Adrenal gland (tissue), 19 donors: ENCODE measurements at regions of chr6 and their contacts with region 1.

Region 1: GRCh38 chr6:156933201-156934068 is 156.3 kb downstream of the ARID1B start:
- DNase-seq: peak in 3 of 7 donors; percentile 40 to 60 (median 48)
- H3K4me3 ChIP-seq: no peak overlapping the region
- H3K27ac ChIP-seq: peak overlapping the region in 2 of 5 donors; percentile 31 to 39
- H3K4me1 ChIP-seq: peaks cover 17 to 33% of the 10 kb centered on the region in 2 donors
- H3K27me3 ChIP-seq: no peaks in the 10 kb centered on the region
- CTCF ChIP-seq: no peak
- POLR2A ChIP-seq: no peak

Region 2: GRCh38 chr6:156816505-156816904 is 116.9 kb before region 1 on chr6:
- intact Hi-C with region 1: loop called in 1 of 2 experiments (anchors 10 kb)
- DNase-seq: peak in 5 of 7 donors; percentile 27 to 83 (median 62)
- H3K4me3 ChIP-seq: no peak overlapping the region
- H3K27ac ChIP-seq: peak overlapping the region in 2 of 5 donors; percentile 6 to 27
- H3K4me1 ChIP-seq: peaks cover 14 to 38% of the 10 kb centered on the region in 2 donors
- H3K27me3 ChIP-seq: no peaks in the 10 kb centered on the region
- CTCF ChIP-seq: no peak
- POLR2A ChIP-seq: no peak

Region 3: GRCh38 chr6:157034436-157035230 is 101.2 kb after region 1 on chr6:
- intact Hi-C with region 1: no loop called
- DNase-seq: no peak
- H3K4me3 ChIP-seq: no peak overlapping the region
- H3K27ac ChIP-seq: no peak overlapping the region
- H3K4me1 ChIP-seq: peaks cover 5 to 54% of the 10 kb centered on the region in 2 donors
- H3K27me3 ChIP-seq: no peaks in the 10 kb centered on the region
- CTCF ChIP-seq: peak; percentile 43 to 79 (median 72)
- POLR2A ChIP-seq: no peak